Naive thymus-derived CD4-positive, alpha-beta T cell (primary cell): ENCODE measurements at regions of chr6 and their contacts with region 1.

Region 1: DNA sequence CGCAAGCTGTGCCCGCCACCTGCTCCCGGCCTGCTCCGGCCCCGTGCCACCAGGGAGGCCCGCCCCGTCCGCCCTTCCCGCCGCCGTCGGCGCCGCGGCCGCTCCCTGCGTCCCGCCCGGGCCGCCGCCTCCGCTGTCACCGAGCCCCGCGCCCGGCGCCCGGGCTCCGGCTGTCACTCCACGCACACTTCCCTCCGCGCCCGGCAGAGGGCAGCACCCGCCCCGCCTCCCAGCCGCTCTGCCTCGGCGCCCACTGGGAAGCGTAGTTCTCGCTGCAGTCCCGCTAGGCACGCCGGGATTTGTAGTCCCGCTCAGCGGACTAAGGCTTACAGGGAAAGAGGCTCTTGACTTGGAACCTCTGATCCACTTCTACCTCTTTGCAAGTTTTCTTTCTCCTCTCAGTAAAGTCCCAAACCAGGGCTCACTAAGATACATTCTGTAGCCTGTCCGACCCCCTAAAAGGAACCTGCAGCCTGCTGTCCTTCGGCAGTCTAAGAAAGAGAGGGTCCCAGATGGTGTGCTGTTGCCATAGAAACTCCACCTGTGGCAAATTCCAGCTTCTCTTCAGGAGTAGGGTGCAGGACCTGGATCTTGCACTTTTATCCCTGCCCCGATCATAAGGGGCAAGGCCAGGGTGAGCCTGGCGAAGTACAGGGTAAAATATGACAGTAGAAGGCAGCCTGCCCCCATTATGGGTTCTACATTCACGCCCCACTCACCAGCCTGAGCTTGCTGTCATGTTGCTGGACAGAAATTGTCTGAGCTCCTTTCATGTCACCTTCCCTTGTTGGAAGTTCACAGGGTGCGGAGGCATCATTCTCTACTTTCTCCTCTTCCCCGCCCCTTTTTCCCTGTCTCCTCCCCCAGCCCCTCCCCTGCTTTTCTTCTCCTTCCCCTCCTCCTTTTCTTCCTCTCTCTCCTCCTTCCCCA is at the start of gene TFEB:
- DNase-seq: peak; percentile 88 to 98 (median 93)
- ATAC-seq: peak; percentile 87
- H3K4me3 ChIP-seq: peak within 1 kb of the TSS; percentile 57
- H3K4me3 Mint-ChIP-seq: peak within 1 kb of the TSS; percentile 66 to 89 (median 80)
- H3K27ac ChIP-seq: peak within 1 kb of the TSS; percentile 80
- H3K27ac Mint-ChIP-seq: peak within 1 kb of the TSS in 8 of 9 donors; percentile 34 to 84 (median 62)
- H3K4me1 ChIP-seq: peaks cover 32 to 37% of the 10 kb centered on the region in 2 donors
- H3K4me1 Mint-ChIP-seq: peaks cover 13 to 32% (median 24%) of the 10 kb centered on the region in 7 donors
- H3K27me3 ChIP-seq: no peaks in the 10 kb centered on the region
- H3K27me3 Mint-ChIP-seq: no peaks in the 10 kb centered on the region
- total RNA-seq, gene TFEB: 7.4 to 39.9 (median 11.8) TPM

Region 2: DNA sequence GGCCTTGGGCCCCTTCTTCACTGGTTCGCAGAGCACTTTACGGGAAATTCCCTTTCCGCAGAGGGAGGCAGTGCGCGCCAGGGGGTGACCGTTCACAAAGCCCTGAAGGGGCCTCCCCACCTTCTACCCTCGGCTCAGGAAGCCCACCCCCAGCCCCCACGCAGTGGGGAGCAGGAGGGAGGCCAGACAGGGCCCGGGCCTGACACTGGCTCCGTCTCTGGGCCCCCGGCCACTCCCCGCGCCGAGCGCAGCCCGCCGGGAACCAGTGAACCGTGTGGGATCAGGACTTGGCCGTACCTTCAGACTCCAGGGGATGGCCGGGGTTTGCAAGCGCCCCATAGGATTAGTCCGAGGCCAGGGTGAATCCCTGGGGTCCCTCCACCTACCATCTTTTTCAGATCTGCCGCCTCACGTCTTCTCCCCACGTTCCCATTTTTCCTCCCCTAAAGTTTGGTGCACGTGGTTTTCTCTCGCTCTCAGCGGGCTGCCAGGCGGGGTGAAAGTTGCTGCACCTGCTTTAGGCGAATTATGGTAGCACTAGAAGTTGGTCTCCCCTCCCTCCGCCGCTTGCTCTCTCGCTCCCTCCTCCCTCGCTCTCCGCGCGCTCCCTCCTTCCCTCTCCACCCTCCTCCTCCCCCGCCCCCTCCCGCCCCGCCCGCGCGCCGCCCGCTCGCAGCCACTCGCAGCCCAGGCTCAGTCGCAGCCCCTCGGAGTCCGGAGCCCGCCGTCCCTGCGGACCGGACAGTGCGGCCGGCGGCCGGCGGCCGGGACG is 189.8 kb before region 1 on chr6 and contains the start of gene FOXP4:
- CTCF ChIA-PET with region 1: no interaction called
- POLR2A ChIA-PET with region 1: no interaction called
- intact Hi-C with region 1: loop called in 1 of 2 experiments (anchors 1 kb)
- DNase-seq: peak; percentile 45 to 83 (median 76)
- ATAC-seq: peak; percentile 95
- H3K4me3 ChIP-seq: peak within 1 kb of the TSS; percentile 64
- H3K4me3 Mint-ChIP-seq: peak within 1 kb of the TSS; percentile 91 to 96 (median 94)
- H3K27ac ChIP-seq: peak within 1 kb of the TSS; percentile 19
- H3K27ac Mint-ChIP-seq: peak within 1 kb of the TSS in 8 of 9 donors; percentile 7 to 86 (median 66)
- H3K4me1 ChIP-seq: peaks cover 20 to 27% of the 10 kb centered on the region in 2 donors
- H3K4me1 Mint-ChIP-seq: peaks cover 6 to 42% (median 25%) of the 10 kb centered on the region in 7 donors
- H3K27me3 ChIP-seq: peaks cover 2 to 9% of the 10 kb centered on the region in 2 donors
- H3K27me3 Mint-ChIP-seq: peaks cover 10 to 73% (median 16%) of the 10 kb centered on the region in 5 donors
- total RNA-seq, gene FOXP4: 3.1 to 7.6 (median 4.9) TPM

Region 3: DNA sequence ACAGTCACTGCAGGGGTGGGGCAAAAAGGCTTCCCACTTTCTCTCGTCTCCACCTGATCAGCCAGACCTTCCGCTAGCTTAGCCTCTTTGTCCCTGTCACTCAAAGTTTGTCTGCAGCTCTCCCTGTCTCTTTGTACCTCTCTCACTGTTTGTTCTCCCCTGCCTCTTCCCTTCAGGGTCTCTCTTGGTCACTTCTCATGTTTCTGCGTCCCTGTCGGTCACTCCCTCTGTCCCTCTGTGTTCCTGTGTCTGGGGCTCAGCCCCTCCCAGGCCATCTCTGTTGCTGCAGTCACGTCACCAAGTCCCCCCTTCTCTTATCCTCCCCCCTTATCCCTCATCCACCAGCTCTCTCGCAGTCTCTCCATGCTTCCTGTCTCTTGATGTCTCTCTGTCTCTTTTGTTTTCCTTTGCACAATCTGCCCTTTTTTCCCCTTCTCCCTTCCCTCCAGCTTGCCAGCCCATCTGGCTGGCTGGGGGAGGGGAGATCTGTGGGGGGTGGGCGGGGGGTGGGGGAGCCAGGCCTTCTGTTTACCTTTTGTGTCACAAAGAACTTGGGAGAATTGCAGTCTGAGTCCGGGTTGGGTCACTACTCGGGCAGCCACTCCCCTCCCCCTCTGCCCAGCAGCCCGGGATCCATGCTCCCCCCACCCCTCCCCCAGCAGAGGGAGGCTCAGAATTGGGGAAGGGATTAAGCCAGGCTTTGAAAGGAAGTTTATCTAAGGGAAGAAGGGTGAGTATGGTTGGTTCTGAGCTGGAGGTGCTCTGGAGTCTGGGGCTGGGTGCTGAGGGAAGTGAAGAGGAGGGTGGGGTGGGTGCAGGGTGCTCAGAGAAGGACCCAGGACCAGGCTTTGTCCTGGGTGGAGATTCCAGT is 157.2 kb before region 1 on chr6:
- CTCF ChIA-PET with region 1: no interaction called
- POLR2A ChIA-PET with region 1: no interaction called
- intact Hi-C with region 1: no loop called
- DNase-seq: no peak
- ATAC-seq: no peak
- H3K4me3 ChIP-seq: no peak overlapping the region
- H3K4me3 Mint-ChIP-seq: no peak overlapping the region
- H3K27ac ChIP-seq: no peak overlapping the region
- H3K27ac Mint-ChIP-seq: peak overlapping the region in 1 of 9 donors; percentile 65
- H3K4me1 ChIP-seq: no peaks in the 10 kb centered on the region
- H3K4me1 Mint-ChIP-seq: peaks cover 0 to 12% (median 3%) of the 10 kb centered on the region in 7 donors
- H3K27me3 ChIP-seq: no peaks in the 10 kb centered on the region
- H3K27me3 Mint-ChIP-seq: no peaks in the 10 kb centered on the region

Region 4: DNA sequence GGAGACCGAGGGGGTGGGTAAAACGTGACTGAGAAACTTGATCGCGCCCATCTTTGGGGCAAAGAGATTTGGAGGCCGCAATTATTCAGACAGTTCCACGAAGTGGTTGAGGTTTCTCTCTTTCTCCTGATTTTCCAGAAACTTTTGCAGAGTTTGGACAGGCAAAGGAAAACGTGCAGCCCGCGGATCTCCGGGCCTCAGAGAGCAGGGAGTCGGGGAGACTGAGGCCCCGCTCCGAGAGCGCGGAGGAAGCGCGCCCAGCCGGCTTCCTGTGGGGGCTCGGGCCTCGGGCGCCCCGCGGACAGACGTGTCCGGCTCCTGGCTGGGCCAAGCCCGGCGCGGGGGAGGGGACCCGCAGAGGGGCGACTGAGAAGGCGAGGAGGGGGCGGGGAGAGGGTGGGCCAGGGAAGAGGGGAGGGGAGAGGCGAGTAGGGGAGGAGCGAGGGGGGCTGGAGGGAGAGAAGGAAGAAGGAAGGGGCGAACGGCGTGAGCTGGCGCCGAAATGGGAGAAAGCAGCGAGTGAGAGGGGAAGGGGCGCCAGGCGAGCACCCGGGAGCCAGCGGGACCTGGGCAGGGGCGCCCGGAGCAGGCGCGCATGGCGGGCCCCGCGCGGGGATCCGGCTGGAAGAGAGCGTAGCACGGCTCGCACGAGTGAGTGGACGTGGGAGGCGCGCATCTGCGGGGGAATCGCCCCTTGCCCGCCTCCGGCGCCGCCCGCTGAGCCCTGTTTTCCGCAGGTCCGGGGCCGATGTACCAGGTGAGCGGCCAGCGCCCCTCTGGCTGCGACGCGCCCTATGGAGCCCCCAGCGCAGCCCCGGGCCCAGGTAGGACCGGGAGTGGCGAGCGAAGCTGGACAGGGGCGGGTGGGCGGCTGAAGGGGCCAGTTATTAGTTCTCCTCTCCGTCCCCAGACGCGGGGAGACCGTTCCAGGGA is 97.4 kb before region 1 on chr6 and contains the start of gene MDFI:
- CTCF ChIA-PET with region 1: no interaction called
- POLR2A ChIA-PET with region 1: no interaction called
- intact Hi-C with region 1: no loop called
- DNase-seq: no peak
- ATAC-seq: no peak
- H3K4me3 ChIP-seq: no peak within 1 kb of the TSS
- H3K4me3 Mint-ChIP-seq: peak within 1 kb of the TSS in 9 of 10 donors; percentile 49 to 79 (median 71)
- H3K27ac ChIP-seq: no peak within 1 kb of the TSS
- H3K27ac Mint-ChIP-seq: no peak within 1 kb of the TSS
- H3K4me1 ChIP-seq: peaks cover 3 to 10% of the 10 kb centered on the region in 2 donors
- H3K4me1 Mint-ChIP-seq: peaks cover 0 to 15% (median 10%) of the 10 kb centered on the region in 7 donors
- H3K27me3 ChIP-seq: peaks cover 0 to 7% of the 10 kb centered on the region in 2 donors
- H3K27me3 Mint-ChIP-seq: peaks cover 46 to 75% (median 59%) of the 10 kb centered on the region in 5 donors
- total RNA-seq, gene MDFI: not detected

Region 5: GRCh38 chr6:41683510-41684310 is 52.0 kb before region 1 on chr6:
- CTCF ChIA-PET with region 1: interaction called, 4 read pairs
- POLR2A ChIA-PET with region 1: interaction called, 7 read pairs
- intact Hi-C with region 1: loop called (anchors 1 kb)
- DNase-seq: peak; percentile 57 to 83 (median 76)
- ATAC-seq: peak; percentile 91
- H3K4me3 ChIP-seq: peak overlapping the region; percentile 61
- H3K4me3 Mint-ChIP-seq: peak overlapping the region; percentile 51 to 84 (median 78)
- H3K27ac ChIP-seq: peak overlapping the region; percentile 53
- H3K27ac Mint-ChIP-seq: peak overlapping the region in 8 of 9 donors; percentile 43 to 86 (median 76)
- H3K4me1 ChIP-seq: peaks cover 3 to 4% of the 10 kb centered on the region in 2 donors
- H3K4me1 Mint-ChIP-seq: peaks cover 0 to 15% (median 11%) of the 10 kb centered on the region in 7 donors
- H3K27me3 ChIP-seq: no peaks in the 10 kb centered on the region
- H3K27me3 Mint-ChIP-seq: peaks cover 0 to 4% (median 0%) of the 10 kb centered on the region in 5 donors

Region 6: DNA sequence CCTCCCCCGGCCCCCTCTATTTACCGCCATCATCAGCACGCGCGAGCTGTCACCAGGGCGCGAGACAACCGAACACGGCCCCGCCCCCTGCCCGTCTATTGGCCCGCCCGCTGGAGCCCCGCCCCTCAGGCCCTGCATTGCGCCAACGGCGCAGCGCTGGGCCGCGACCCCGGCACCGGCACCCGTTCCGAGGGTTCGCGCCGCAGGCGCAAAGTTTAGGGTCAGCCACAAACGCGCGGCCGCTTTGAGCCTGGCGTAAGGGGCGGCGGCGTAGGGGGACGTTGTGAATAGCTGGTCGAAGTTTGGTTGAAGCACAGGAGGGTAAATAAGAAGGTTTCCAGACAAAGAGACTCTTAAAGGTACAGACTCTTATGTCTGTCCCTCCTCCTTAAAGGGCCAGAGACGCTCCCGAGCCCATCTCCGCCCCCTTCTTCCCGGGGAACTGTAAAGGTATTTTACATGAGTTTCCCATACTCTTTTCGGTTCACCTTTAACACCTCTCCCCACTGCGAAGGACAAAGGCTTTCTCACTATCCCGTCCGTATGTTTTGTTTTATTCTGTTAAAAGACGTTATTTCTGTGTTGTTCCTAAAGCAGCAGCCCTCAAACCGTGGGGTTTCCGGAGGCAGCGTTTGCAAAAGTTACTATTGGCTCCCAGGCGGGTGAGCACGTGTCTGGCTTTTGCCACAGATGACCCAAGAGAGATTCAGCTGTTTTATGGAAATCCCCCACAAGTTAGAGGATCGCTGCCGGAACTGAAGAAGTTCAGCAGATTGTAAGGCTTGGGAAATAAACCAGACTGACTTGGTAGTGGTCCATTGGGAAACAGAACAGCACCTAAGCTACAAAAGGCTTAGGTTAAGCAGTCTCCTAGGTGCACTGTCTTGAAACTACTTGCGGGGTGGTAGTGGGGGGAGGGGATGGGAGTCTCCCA is 159.9 kb after region 1 on chr6 and contains the start of gene USP49:
- CTCF ChIA-PET with region 1: no interaction called
- POLR2A ChIA-PET with region 1: no interaction called
- intact Hi-C with region 1: loop called (anchors 2 kb)
- DNase-seq: peak; percentile 83 to 92 (median 90)
- ATAC-seq: peak; percentile 97
- H3K4me3 ChIP-seq: peak within 1 kb of the TSS; percentile 69
- H3K4me3 Mint-ChIP-seq: peak within 1 kb of the TSS in 1 of 10 donors; percentile 94
- H3K27ac ChIP-seq: peak within 1 kb of the TSS; percentile 76
- H3K27ac Mint-ChIP-seq: peak within 1 kb of the TSS in 7 of 9 donors; percentile 78 to 97 (median 93)
- H3K4me1 ChIP-seq: peaks cover 14 to 26% of the 10 kb centered on the region in 2 donors
- H3K4me1 Mint-ChIP-seq: peaks cover 5 to 17% (median 11%) of the 10 kb centered on the region in 7 donors
- H3K27me3 ChIP-seq: no peaks in the 10 kb centered on the region
- H3K27me3 Mint-ChIP-seq: peaks cover 0 to 7% (median 0%) of the 10 kb centered on the region in 5 donors
- total RNA-seq, gene USP49: 1.8 to 6.0 (median 3.1) TPM

Region 7: DNA sequence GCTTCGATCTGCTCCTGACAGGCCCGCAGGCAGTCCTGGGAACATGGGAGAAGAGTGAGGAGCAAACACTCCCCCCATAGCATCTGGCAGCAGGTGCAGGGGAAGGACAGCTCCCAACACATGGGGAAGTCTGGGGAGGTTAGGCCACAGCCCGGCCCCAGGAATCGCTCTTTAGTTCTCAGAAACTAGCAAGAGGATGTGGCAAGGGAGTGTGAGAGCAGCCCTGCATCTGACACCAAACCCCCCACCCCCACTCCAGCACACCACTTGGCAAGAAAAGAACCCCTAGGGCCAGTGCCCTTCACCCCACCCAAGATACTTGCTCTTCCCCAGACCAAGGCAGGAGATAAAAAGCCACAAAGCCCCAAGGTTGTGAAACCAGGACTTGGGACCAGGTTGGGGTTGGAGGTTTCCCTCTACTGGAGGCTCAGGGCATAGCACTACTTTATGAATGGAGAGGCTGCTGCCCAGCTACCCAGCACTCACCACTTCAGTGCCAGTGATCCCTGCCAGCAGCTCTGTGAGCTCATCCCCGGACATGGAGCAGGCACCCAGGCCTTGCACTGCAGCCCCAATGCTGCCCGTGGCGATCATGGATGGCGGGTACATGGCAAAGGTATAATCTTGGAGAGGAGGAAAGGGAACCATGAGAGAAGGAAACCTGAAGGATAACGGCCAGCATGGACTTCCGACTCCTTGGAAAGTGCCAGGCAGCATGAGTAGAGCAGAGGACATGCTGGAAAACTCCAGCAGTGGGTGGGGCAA is 200.6 kb after region 1 on chr6:
- CTCF ChIA-PET with region 1: no interaction called
- POLR2A ChIA-PET with region 1: no interaction called
- intact Hi-C with region 1: loop called in 1 of 2 experiments (anchors 2 kb)
- DNase-seq: peak in 8 of 9 donors; percentile 52 to 72 (median 63)
- ATAC-seq: peak; percentile 79
- H3K4me3 ChIP-seq: peak overlapping the region; percentile 34
- H3K4me3 Mint-ChIP-seq: peak overlapping the region; percentile 64 to 100 (median 90)
- H3K27ac ChIP-seq: peak overlapping the region; percentile 76
- H3K27ac Mint-ChIP-seq: peak overlapping the region; percentile 85 to 95 (median 90)
- H3K4me1 ChIP-seq: peaks cover 57 to 61% of the 10 kb centered on the region in 2 donors
- H3K4me1 Mint-ChIP-seq: peaks cover 48 to 81% (median 74%) of the 10 kb centered on the region in 7 donors
- H3K27me3 ChIP-seq: no peaks in the 10 kb centered on the region
- H3K27me3 Mint-ChIP-seq: no peaks in the 10 kb centered on the region

Region 8: DNA sequence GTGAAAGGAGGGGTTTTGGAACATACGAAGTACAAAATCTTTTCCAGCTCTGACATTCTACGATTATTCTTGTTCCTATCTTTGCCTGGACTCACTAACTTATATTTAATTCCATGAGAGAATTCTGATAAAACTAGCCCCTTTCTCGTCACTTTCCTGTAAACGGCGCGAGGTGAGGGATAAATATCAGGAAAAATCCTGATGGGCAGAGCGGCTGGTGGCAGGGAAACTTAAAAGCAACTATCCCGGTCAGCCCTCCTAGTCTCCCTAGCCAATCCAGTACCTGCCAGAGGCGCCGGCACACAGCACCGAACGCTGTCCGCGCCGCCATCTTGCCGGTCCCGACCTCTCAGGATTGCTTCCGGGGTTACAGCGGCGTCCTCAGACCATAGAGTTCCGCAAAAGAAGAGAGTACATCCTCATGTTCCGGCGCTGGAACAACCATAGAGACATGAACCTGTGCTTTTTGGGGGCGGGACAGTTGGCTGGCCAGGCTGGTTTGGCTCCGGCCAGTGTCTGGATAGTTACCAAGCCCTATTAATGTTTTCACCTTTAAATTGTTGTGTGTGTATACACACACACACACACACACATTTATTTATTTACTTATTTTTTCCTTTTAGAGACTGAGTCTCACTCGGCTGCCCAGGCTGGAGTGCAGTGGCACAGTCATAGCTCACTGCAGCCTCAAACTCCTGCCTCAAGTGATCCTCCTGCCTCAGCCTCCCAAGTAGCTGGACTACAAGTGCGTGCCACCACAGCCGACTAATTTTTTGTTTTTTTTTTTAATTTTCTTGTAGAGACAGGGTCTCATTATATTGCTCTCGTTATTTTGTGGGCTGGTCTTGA is 482.1 kb after region 1 on chr6 and contains the start of gene MRPS10:
- CTCF ChIA-PET with region 1: interaction called, 4 read pairs
- POLR2A ChIA-PET with region 1: no interaction called
- intact Hi-C with region 1: loop called (anchors 1 kb)
- DNase-seq: peak; percentile 72 to 92 (median 87)
- ATAC-seq: peak; percentile 100
- H3K4me3 ChIP-seq: peak within 1 kb of the TSS; percentile 96
- H3K4me3 Mint-ChIP-seq: peak within 1 kb of the TSS; percentile 92 to 100 (median 98)
- H3K27ac ChIP-seq: peak within 1 kb of the TSS; percentile 77
- H3K27ac Mint-ChIP-seq: peak within 1 kb of the TSS; percentile 87 to 99 (median 97)
- H3K4me1 ChIP-seq: peaks cover 9 to 14% of the 10 kb centered on the region in 2 donors
- H3K4me1 Mint-ChIP-seq: peaks cover 7 to 34% (median 24%) of the 10 kb centered on the region in 7 donors
- H3K27me3 ChIP-seq: no peaks in the 10 kb centered on the region
- H3K27me3 Mint-ChIP-seq: no peaks in the 10 kb centered on the region
- total RNA-seq, gene MRPS10: 17.0 to 30.3 (median 25.3) TPM

Region 9: DNA sequence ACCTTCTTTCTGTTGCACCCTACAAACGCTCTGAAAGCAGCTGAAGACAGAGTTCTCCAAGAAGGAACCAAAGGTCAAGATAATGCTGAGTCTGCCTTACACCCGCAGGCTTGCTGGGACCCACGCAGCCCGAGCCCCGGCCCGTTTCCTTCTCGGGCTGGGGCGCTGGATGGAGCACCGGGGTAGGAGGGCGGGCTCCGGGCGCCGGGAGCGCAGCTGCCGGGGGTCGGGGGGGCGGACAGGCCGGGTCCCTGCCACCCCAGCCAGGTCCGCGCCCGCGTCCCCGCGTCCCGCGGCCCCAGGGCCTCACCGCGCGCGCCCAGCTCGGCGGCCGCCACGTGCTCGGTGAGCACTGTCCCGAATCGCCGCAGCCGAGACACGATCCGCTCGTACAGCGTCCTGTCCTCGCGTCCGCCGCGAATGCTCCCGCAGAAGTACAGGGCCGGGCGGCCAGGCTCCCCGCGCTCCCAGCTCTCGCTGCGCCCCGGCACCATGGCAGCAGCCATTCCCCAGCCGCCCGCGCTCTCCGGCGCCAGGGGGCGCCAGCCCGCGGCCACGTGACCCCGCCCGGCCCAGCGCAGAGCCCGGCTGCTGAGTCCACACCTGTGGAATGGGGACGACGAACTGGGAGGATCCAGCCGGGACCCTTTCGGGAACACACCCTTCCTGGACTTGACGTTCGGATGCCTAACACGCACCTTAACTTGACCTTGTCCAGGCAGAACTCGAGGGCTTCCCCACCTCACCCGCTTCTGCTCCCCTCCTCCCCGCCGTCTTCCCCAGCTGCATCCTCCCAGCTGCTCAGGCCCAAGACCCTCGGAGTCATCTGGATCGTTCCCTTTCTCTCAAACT is 1493.5 kb after region 1 on chr6 and contains the start of gene DNPH1:
- CTCF ChIA-PET with region 1: no interaction called
- POLR2A ChIA-PET with region 1: no interaction called
- intact Hi-C with region 1: loop called in 1 of 2 experiments (anchors 10 kb)
- DNase-seq: peak; percentile 65 to 91 (median 81)
- ATAC-seq: peak; percentile 84
- H3K4me3 ChIP-seq: peak within 1 kb of the TSS; percentile 53
- H3K4me3 Mint-ChIP-seq: peak within 1 kb of the TSS; percentile 87 to 95 (median 91)
- H3K27ac ChIP-seq: peak within 1 kb of the TSS; percentile 88
- H3K27ac Mint-ChIP-seq: peak within 1 kb of the TSS; percentile 92 to 98 (median 95)
- H3K4me1 ChIP-seq: peaks cover 5 to 24% of the 10 kb centered on the region in 2 donors
- H3K4me1 Mint-ChIP-seq: peaks cover 28 to 48% (median 40%) of the 10 kb centered on the region in 7 donors
- H3K27me3 ChIP-seq: no peaks in the 10 kb centered on the region
- H3K27me3 Mint-ChIP-seq: peaks cover 0 to 16% (median 0%) of the 10 kb centered on the region in 5 donors
- total RNA-seq, gene DNPH1: 25.4 to 65.7 (median 33.9) TPM